Aorta (tissue), 5 donors: ENCODE measurements at regions of chr2 and their contacts with region 1.

Region 1: GRCh38 chr2:54618646-54619565 is 104.6 kb upstream of the EML6 start:
- DNase-seq: no peak
- ATAC-seq: no peak
- H3K4me3 ChIP-seq: no peak overlapping the region
- H3K27ac ChIP-seq: no peak overlapping the region
- H3K4me1 ChIP-seq: peaks cover 3 to 4% of the 10 kb centered on the region in 2 donors
- H3K27me3 ChIP-seq: no peaks in the 10 kb centered on the region

Region 2: DNA sequence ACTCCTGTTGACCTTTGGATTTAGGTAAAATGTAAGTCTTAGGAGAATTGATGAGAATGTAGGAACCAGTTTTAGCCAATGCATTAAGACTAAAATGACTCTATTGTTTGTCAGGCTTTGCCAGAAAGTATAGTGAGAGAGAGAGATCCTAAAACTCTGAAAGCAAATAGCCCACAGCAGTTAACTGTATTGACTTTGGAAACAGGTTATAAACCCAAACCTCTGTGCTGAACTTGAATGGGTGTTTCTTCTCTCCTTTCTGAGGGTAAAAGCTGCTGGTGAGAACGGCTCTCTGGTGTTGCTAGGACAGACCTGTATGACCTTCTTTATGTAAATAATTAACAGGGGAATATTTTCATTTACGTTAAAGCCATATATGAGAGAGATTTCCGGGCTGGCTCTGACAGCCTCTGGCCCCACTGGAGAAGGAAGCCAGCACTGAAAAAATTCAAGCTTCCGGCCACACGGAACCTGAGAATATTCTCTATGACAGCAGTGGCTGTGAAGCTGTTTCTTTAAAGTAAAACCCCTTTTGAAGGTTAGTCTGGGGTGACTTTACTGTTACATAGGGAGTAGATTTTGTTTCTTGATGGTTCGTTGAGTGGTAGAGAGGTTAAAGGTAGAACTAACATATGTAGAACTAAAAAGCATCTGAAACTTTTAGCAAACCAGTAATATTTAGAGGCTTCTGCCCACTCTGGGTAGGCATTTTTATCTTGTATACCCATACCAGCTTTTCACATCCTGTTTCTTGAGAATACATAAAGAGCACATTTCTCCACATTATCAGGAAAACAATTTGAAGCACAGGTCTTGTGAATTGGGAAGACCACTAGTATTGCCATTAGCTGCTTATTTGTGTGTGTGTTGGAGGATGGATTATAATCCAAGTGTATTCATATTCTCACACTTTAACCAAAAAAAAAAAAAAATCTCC is 39.0 kb before region 1 on chr2:
- intact Hi-C with region 1: loop called in 1 of 2 experiments (anchors 5 kb)
- DNase-seq: no peak
- ATAC-seq: no peak
- H3K4me3 ChIP-seq: no peak overlapping the region
- H3K27ac ChIP-seq: no peak overlapping the region
- H3K4me1 ChIP-seq: peaks cover 5 to 18% of the 10 kb centered on the region in 2 donors
- H3K27me3 ChIP-seq: no peaks in the 10 kb centered on the region

Region 3: GRCh38 chr2:54903736-54904554 is 285.0 kb after region 1 on chr2:
- intact Hi-C with region 1: no loop called
- DNase-seq: peak; percentile 78 to 79
- ATAC-seq: peak; percentile 39
- H3K4me3 ChIP-seq: no peak overlapping the region
- H3K27ac ChIP-seq: no peak overlapping the region
- H3K4me1 ChIP-seq: peaks cover 0 to 4% of the 10 kb centered on the region in 2 donors
- H3K27me3 ChIP-seq: no peaks in the 10 kb centered on the region